ENCODE measurements at regions of chr13 and their contacts with region 1.

Region 1: GRCh38 chr13:59144700-59145099 is 1019.0 kb downstream of the DIAPH3 start:
- DNase-seq: no peak
- ATAC-seq: no peak
- H3K4me3 ChIP-seq: no peak overlapping the region
- H3K4me3 Mint-ChIP-seq: no peak overlapping the region
- H3K27ac ChIP-seq: no peak overlapping the region
- H3K27ac Mint-ChIP-seq: no peak overlapping the region
- H3K4me1 ChIP-seq: no peaks in the 10 kb centered on the region
- H3K4me1 Mint-ChIP-seq: no peaks in the 10 kb centered on the region
- H3K27me3 ChIP-seq: no peaks in the 10 kb centered on the region
- H3K27me3 Mint-ChIP-seq: no peaks in the 10 kb centered on the region

Region 2: GRCh38 chr13:60150538-60150937 is 1005.8 kb after region 1 on chr13:
- CTCF ChIA-PET with region 1: no interaction called
- POLR2A ChIA-PET with region 1: interaction called in 1 of 2 experiments, 10 read pairs
- DNase-seq: no peak
- ATAC-seq: no peak
- H3K4me3 ChIP-seq: no peak overlapping the region
- H3K4me3 Mint-ChIP-seq: no peak overlapping the region
- H3K27ac ChIP-seq: no peak overlapping the region
- H3K27ac Mint-ChIP-seq: no peak overlapping the region
- H3K4me1 ChIP-seq: no peaks in the 10 kb centered on the region
- H3K4me1 Mint-ChIP-seq: peaks cover 0 to 12% (median 3%) of the 10 kb centered on the region in 3 donors
- H3K27me3 ChIP-seq: no peaks in the 10 kb centered on the region
- H3K27me3 Mint-ChIP-seq: no peaks in the 10 kb centered on the region

Measured in T-cell (primary cell).